ENCODE measurements at regions of chr9 and their contacts with region 1.

Region 1: DNA sequence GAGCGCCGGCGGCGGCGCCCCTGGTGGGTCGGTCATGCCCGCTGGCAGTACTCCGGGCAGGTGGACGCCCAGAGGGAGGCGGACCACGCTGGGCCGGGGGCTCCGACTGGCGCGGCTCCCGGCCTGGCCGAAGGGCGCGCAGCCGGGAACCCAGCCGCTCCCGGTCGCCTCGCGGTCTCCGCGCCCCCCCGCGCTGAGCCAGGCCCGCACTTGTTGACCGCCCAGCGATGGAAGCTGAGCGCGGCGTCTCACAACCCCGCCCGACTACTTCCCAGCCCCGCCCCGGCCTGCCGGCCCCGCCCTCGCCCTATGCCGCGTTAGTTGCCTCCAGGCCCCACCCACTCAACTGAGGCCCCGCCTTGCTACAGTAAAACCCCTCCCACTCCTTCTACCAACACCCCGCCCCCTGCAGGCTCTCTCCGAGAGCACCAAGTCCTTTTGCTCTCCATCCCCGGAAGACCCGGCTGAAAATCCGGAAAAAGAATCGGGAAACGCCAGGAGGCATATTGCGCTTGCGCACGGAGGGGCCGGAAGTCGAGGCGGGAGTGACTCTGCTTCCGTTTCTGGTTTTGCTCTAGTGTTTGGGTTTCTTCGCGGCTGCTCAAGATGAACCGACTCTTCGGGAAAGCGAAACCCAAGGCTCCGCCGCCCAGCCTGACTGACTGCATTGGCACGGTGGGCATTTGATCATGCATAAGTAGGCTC is at the starts of genes BAG1 and CHMP5:
- DNase-seq: peak; percentile 99
- H3K4me3 ChIP-seq: peak within 1 kb of the TSS; percentile 86 to 99 (median 96)
- H3K27ac ChIP-seq: peak within 1 kb of the TSS; percentile 31
- H3K4me1 ChIP-seq: peaks cover 0 to 2% (median 2%) of the 10 kb centered on the region in 4 experiments; a peak in 2 of 7 replicates
- H3K27me3 ChIP-seq: no peaks in the 10 kb centered on the region
- CTCF ChIP-seq: peak; percentile 8 to 33 (median 23); a peak in 2 of 4 replicates
- EP300 ChIP-seq: no peak
- POLR2A ChIP-seq: peak in 1 of 2 experiments; percentile 66; a peak in 1 of 3 replicates
- RAD21 ChIP-seq: no peak
- total RNA-seq, gene BAG1: 59.8 and 61.5 TPM in 2 replicates
- total RNA-seq, gene CHMP5: 44.1 and 47.3 TPM in 2 replicates

Region 2: GRCh38 chr9:33211695-33212393 is 52.8 kb before region 1 on chr9:
- CTCF ChIA-PET with region 1: no interaction called
- POLR2A ChIA-PET with region 1: no interaction called
- DNase-seq: no peak
- H3K4me3 ChIP-seq: no peak overlapping the region
- H3K27ac ChIP-seq: no peak overlapping the region
- H3K4me1 ChIP-seq: no peaks in the 10 kb centered on the region
- H3K27me3 ChIP-seq: no peaks in the 10 kb centered on the region; a peak in 1 of 7 replicates
- CTCF ChIP-seq: no peak
- EP300 ChIP-seq: no peak
- POLR2A ChIP-seq: no peak
- RAD21 ChIP-seq: no peak

Region 3: DNA sequence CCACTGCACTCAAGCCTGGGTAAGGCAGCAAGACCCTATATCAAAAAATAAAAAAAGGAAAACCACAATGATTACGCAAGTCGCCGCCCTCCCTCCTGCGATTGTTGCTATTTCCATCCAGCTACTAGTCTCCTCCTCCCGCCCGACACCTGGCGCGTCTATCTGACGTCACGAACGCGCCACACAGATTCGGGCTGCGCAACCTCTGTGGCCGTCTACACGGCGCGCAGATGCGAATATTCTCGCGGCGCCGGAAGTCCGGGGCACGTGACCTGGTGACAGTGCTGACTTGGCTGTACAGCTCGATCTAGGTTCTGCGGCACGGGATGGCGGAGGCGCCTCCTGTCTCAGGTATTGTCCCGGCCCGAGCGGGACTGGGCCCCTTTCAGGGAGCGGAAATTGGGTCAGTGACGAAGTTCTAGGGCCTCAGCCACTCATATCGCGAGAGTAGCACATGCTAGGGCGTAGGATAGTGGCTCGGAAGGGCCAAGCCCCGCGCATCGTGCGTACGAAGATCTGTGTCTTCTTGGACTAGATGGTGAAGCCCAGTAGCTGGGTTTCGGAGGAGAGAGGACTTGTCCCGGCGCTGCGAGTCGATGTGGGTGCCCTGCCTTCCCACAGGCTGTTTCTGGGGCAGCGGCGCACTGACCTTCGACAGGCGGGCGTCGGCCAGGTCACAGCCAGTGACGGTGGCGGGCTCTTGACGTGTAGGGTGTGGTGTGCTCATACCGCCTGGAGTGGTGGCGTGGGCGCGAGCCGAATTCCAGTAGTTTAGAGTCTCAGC is 25.8 kb after region 1 on chr9 and contains the start of gene NFX1:
- CTCF ChIA-PET with region 1: interaction called, 3 read pairs
- POLR2A ChIA-PET with region 1: interaction called, 29 read pairs
- DNase-seq: peak; percentile 85 to 96
- H3K4me3 ChIP-seq: peak within 1 kb of the TSS; percentile 84 to 97 (median 90)
- H3K27ac ChIP-seq: peak within 1 kb of the TSS; percentile 99
- H3K4me1 ChIP-seq: peaks cover 0 to 8% (median 2%) of the 10 kb centered on the region in 4 experiments; a peak in 3 of 7 replicates
- H3K27me3 ChIP-seq: no peaks in the 10 kb centered on the region
- CTCF ChIP-seq: no peak
- EP300 ChIP-seq: no peak
- POLR2A ChIP-seq: peak; percentile 95 to 96
- RAD21 ChIP-seq: no peak
- total RNA-seq, gene NFX1: 26.1 and 28.4 TPM in 2 replicates

Region 4: GRCh38 chr9:33329117-33329563 is 64.5 kb after region 1 on chr9:
- CTCF ChIA-PET with region 1: no interaction called
- POLR2A ChIA-PET with region 1: no interaction called
- DNase-seq: no peak
- H3K4me3 ChIP-seq: no peak overlapping the region
- H3K27ac ChIP-seq: no peak overlapping the region
- H3K4me1 ChIP-seq: no peaks in the 10 kb centered on the region
- H3K27me3 ChIP-seq: no peaks in the 10 kb centered on the region
- CTCF ChIP-seq: no peak
- EP300 ChIP-seq: no peak
- POLR2A ChIP-seq: no peak
- RAD21 ChIP-seq: no peak

Region 5: GRCh38 chr9:33340186-33340585 is 75.6 kb after region 1 on chr9:
- CTCF ChIA-PET with region 1: no interaction called
- POLR2A ChIA-PET with region 1: no interaction called
- DNase-seq: peak in 1 of 2 experiments; percentile 45
- H3K4me3 ChIP-seq: no peak overlapping the region
- H3K27ac ChIP-seq: no peak overlapping the region
- H3K4me1 ChIP-seq: no peaks in the 10 kb centered on the region
- H3K27me3 ChIP-seq: no peaks in the 10 kb centered on the region
- CTCF ChIP-seq: no peak
- EP300 ChIP-seq: no peak
- POLR2A ChIP-seq: no peak
- RAD21 ChIP-seq: no peak

Measured in H1 (cell line).